B cell (primary cell): ENCODE measurements at regions of chr3 and their contacts with region 1.

Region 1: DNA sequence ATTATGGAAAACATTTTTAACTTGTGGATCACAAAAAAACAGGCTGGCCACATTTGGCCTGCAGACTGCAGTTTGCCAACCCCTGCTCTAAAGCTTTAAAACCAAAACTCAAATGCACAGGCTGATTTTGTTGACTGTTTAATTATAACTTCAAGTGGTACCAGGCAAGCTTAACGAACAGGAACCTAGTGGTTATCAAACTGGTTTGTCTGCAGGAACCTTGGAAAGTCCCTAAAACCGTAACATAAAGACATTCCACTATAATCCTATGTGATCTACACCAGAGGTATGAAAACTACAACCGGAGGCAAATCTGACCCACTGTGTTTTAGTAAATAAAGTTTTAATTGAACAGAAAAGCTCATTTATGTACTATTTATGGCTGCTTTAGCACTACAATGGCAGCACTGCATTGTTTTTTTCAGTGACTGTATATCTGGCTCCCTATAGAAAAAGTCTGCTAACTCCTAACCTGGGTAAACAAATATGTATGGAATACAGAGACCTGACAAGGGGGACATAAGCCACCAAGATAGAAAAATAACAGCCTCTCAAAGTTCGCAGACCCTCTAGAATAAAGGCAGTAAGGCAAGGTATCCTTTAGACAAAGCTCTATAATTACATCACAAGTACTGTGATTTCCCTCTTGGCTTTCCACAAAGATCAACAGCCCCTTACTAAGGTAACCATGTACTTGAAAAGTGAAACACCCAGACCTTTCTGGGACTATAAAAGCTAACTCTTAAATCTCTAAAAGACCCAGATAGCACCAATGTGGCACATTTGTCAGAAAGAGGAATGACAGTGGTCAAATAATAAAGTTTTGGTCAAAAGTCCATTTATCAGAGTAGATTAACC is 52.1 kb downstream of the TBL1XR1 start:
- DNase-seq: peak; percentile 71
- ATAC-seq: peak; percentile 70
- H3K4me3 ChIP-seq: peak overlapping the region in 3 of 5 experiments; percentile 16 to 29 (median 18)
- H3K4me3 Mint-ChIP-seq: peak overlapping the region; percentile 68
- H3K27ac ChIP-seq: peak overlapping the region; percentile 75 to 85
- H3K27ac Mint-ChIP-seq: peak overlapping the region; percentile 86
- H3K4me1 ChIP-seq: peaks cover 70 to 72% of the 10 kb centered on the region in 2 donors
- H3K4me1 Mint-ChIP-seq: peaks cover 83% of the 10 kb centered on the region
- H3K27me3 ChIP-seq: no peaks in the 10 kb centered on the region
- H3K27me3 Mint-ChIP-seq: no peaks in the 10 kb centered on the region
- CTCF ChIP-seq: no peak

Region 2: GRCh38 chr3:176789281-176789705 is 355.9 kb before region 1 on chr3:
- CTCF ChIA-PET with region 1: no interaction called
- POLR2A ChIA-PET with region 1: no interaction called
- intact Hi-C with region 1: no loop called
- DNase-seq: no peak
- ATAC-seq: no peak
- H3K4me3 ChIP-seq: no peak overlapping the region
- H3K4me3 Mint-ChIP-seq: no peak overlapping the region
- H3K27ac ChIP-seq: no peak overlapping the region
- H3K27ac Mint-ChIP-seq: no peak overlapping the region
- H3K4me1 ChIP-seq: no peaks in the 10 kb centered on the region
- H3K4me1 Mint-ChIP-seq: no peaks in the 10 kb centered on the region
- H3K27me3 ChIP-seq: no peaks in the 10 kb centered on the region
- H3K27me3 Mint-ChIP-seq: no peaks in the 10 kb centered on the region
- CTCF ChIP-seq: no peak

Region 3: DNA sequence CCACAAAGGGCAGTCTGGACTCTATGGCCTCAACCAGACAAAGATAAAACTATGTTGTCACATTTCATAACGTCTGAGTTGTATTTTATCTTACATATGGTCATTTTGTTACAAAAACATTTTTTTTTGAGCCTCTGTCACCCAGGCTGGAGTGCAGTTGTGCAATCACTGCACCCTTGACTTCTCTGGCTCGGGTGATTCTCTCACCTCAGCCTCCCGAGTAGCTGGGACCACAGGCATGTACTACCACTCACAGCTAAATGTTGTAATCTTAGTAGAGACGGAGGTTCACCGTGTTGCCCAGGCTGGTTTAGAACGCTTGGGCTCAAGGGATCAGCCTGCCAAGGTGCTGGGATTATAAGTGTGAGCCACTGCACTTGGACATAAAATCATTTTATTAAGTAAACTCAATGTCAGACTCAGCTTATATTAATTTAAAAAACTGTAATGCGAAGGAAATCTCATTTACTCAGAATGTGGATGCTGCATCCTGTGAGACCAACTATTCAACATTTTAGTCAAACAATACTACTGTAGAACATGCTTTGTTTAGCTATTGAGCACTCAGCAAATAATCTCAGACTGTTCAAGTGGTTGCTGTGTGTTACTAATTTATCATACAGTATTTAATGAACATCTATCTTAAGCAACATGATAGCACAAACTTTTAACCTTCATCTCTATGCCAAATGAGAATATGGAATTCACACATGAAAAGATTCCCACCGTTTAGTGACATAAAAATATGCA is 157.1 kb before region 1 on chr3:
- CTCF ChIA-PET with region 1: no interaction called
- POLR2A ChIA-PET with region 1: no interaction called
- intact Hi-C with region 1: no loop called
- DNase-seq: no peak
- ATAC-seq: no peak
- H3K4me3 ChIP-seq: no peak overlapping the region
- H3K4me3 Mint-ChIP-seq: no peak overlapping the region
- H3K27ac ChIP-seq: no peak overlapping the region
- H3K27ac Mint-ChIP-seq: no peak overlapping the region
- H3K4me1 ChIP-seq: no peaks in the 10 kb centered on the region
- H3K4me1 Mint-ChIP-seq: no peaks in the 10 kb centered on the region
- H3K27me3 ChIP-seq: no peaks in the 10 kb centered on the region
- H3K27me3 Mint-ChIP-seq: peaks cover 4% of the 10 kb centered on the region
- CTCF ChIP-seq: no peak

Region 4: GRCh38 chr3:177098551-177098950 is 46.6 kb before region 1 on chr3:
- CTCF ChIA-PET with region 1: no interaction called
- POLR2A ChIA-PET with region 1: no interaction called
- intact Hi-C with region 1: no loop called
- DNase-seq: no peak
- ATAC-seq: no peak
- H3K4me3 ChIP-seq: no peak overlapping the region
- H3K4me3 Mint-ChIP-seq: no peak overlapping the region
- H3K27ac ChIP-seq: no peak overlapping the region
- H3K27ac Mint-ChIP-seq: no peak overlapping the region
- H3K4me1 ChIP-seq: no peaks in the 10 kb centered on the region
- H3K4me1 Mint-ChIP-seq: peaks cover 34% of the 10 kb centered on the region
- H3K27me3 ChIP-seq: no peaks in the 10 kb centered on the region
- H3K27me3 Mint-ChIP-seq: no peaks in the 10 kb centered on the region
- CTCF ChIP-seq: no peak

Region 5: GRCh38 chr3:177169936-177170722 is 25.0 kb after region 1 on chr3:
- CTCF ChIA-PET with region 1: interaction called, 4 read pairs
- POLR2A ChIA-PET with region 1: interaction called, 7 read pairs
- intact Hi-C with region 1: loop called (anchors 2 kb)
- DNase-seq: no peak
- ATAC-seq: no peak
- H3K4me3 ChIP-seq: no peak overlapping the region
- H3K4me3 Mint-ChIP-seq: no peak overlapping the region
- H3K27ac ChIP-seq: no peak overlapping the region
- H3K27ac Mint-ChIP-seq: no peak overlapping the region
- H3K4me1 ChIP-seq: peaks cover 20 to 28% of the 10 kb centered on the region in 2 donors
- H3K4me1 Mint-ChIP-seq: peaks cover 63% of the 10 kb centered on the region
- H3K27me3 ChIP-seq: no peaks in the 10 kb centered on the region
- H3K27me3 Mint-ChIP-seq: no peaks in the 10 kb centered on the region
- CTCF ChIP-seq: no peak